ENCODE measurements at regions of chr16 and their contacts with region 1.

Region 1: GRCh38 chr16:80526425-80527061 is 14.2 kb upstream of the DYNLRB2 start:
- DNase-seq: peak; percentile 59
- CTCF ChIP-seq: peak; percentile 63

Region 2: DNA sequence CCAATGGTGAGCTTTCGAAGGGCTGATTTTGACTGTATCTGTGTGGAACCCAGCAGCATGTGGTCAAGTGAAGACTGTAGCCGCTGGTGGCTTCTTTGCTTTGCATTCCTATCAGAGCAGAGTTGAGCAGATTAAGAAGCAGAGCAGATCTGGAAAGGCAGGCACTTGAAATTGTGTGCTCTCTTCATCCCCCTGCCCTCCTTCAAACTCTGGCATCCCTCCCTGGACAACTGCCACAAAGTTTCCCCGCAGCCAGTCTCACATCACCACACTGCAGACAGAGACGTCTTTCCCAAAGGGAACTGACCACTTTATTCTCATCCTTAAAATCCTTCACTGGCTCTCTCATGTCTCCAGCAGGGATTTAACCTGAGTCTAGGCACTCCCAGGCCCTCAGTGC is 222.9 kb before region 1 on chr16:
- in situ Hi-C with region 1: no loop called
- DNase-seq: no peak
- CTCF ChIP-seq: no peak

Region 3: GRCh38 chr16:80733407-80733806 is 206.9 kb after region 1 on chr16:
- in situ Hi-C with region 1: no loop called
- DNase-seq: no peak
- CTCF ChIP-seq: no peak

Region 4: DNA sequence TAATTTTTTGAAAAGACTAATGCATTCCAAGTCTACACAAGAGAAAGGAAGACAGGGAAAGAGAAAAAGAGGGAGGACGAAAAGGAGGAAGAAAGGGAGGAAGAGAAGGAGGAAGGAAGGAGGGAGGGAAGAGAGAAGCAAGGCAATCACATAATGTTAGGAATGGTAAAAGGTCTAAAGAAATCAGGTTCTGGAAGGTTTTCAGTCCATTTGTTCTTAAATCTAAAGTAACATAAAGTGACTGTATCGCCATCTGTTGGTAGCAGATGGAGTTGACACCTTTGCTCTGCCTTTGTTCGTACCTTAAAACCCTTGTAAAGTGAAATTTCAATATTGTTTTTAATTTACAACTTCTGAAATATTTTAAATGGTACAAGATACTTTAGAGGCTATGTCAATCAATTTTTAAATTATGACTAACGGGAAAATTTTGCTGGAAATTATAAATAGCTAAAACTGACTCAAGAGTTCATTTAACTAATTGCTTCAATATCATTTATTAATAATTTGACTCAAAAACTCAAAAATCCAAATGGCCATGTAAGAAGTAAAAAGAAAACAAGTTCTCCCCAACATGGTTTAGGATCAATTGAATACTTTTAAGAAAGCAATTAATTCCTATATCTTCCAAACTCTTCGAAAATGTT is 298.3 kb after region 1 on chr16:
- in situ Hi-C with region 1: loop called (anchors 10 kb)
- DNase-seq: peak; percentile 47
- CTCF ChIP-seq: peak; percentile 67

Measured in GM13976 (cell line).